ENCODE measurements at regions of chr2 and their contacts with region 1.

Region 1: DNA sequence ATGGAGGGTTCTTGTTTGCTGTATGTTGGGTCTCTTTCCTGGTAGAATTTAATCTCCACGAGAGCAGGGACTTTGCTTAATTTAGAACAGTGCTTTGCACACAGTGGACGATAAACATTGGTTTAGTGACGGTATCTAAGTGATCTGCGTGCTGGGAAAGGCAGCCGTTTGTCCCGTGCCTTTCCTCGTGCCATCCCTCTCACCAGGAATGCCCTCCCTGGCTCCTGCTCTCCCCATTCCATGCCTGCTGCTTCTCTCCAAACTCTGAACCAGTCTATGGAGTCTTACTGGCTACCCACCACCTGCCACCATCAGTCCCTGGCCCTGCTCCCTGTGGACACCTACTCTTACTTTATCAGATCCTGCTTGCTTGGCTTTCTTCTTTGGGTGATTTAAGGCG is 27.3 kb upstream of the TNP1 start:
- DNase-seq: no peak
- ATAC-seq: no peak
- H3K4me3 ChIP-seq: no peak overlapping the region
- H3K4me3 Mint-ChIP-seq: no peak overlapping the region
- H3K27ac ChIP-seq: no peak overlapping the region
- H3K27ac Mint-ChIP-seq: no peak overlapping the region
- H3K4me1 ChIP-seq: no peaks in the 10 kb centered on the region
- H3K4me1 Mint-ChIP-seq: no peaks in the 10 kb centered on the region
- H3K27me3 ChIP-seq: no peaks in the 10 kb centered on the region
- H3K27me3 Mint-ChIP-seq: no peaks in the 10 kb centered on the region
- CTCF ChIP-seq: no peak

Region 2: DNA sequence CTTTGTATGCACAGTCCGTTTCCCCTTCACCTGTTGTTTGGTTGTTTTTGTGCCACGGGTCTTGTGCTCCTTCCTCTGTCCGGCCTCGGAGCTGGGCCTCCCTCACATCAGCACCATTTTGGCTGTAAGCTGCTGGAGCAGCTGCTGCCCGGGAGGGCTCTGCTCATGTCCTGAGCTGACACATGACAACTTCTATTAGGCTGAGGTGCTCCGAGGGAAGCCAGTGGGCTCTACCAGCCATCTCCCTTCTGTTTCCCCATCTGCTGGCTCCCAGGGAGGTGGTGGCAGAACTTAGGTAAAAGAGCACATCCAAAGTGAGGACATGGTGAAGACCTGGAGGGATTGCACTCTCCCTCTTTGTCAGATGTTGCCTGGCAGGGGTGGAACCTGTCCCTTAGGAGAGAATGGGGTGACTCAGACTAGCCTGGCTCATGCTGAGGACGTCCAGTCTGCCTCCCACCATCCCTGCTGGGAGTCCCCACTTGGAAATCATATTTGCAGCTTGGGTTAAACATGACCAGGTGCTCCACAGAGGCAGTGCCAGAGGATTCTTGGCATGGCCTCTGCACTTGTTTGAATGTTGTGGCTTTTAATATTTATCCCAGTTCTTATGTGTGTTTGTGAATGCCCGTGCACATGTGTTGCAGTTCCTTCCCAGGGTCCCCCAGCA is 22.5 kb after region 1 on chr2:
- CTCF ChIA-PET with region 1: no interaction called
- POLR2A ChIA-PET with region 1: no interaction called
- intact Hi-C with region 1: loop called in 1 of 2 experiments (anchors 2 kb)
- DNase-seq: no peak
- ATAC-seq: no peak
- H3K4me3 ChIP-seq: no peak overlapping the region
- H3K4me3 Mint-ChIP-seq: no peak overlapping the region
- H3K27ac ChIP-seq: no peak overlapping the region
- H3K27ac Mint-ChIP-seq: no peak overlapping the region
- H3K4me1 ChIP-seq: no peaks in the 10 kb centered on the region
- H3K4me1 Mint-ChIP-seq: no peaks in the 10 kb centered on the region
- H3K27me3 ChIP-seq: no peaks in the 10 kb centered on the region
- H3K27me3 Mint-ChIP-seq: no peaks in the 10 kb centered on the region
- CTCF ChIP-seq: no peak